ENCODE measurements at regions of chr5 and their contacts with region 1.

Region 1: GRCh38 chr5:56814963-56815658 is at the start of gene MAP3K1:
- DNase-seq: peak; percentile 94
- H3K4me3 Mint-ChIP-seq: peak within 1 kb of the TSS; percentile 91
- H3K27ac Mint-ChIP-seq: peak within 1 kb of the TSS; percentile 92
- H3K4me1 Mint-ChIP-seq: peaks cover 43% of the 10 kb centered on the region
- H3K27me3 Mint-ChIP-seq: peaks cover 3% of the 10 kb centered on the region
- total RNA-seq, gene MAP3K1: 27.6 and 27.9 TPM in 2 replicates

Region 2: GRCh38 chr5:55994574-55995333 is 820.4 kb before region 1 on chr5 and contains the start of gene IL6ST:
- intact Hi-C with region 1: loop called (anchors 5 kb)
- DNase-seq: peak; percentile 99
- H3K4me3 Mint-ChIP-seq: peak within 1 kb of the TSS; percentile 93
- H3K27ac Mint-ChIP-seq: peak within 1 kb of the TSS; percentile 94
- H3K4me1 Mint-ChIP-seq: peaks cover 52% of the 10 kb centered on the region
- H3K27me3 Mint-ChIP-seq: no peaks in the 10 kb centered on the region
- total RNA-seq, gene IL6ST: 65.1 and 68.2 TPM in 2 replicates

Region 3: GRCh38 chr5:56481428-56482357 is 333.4 kb before region 1 on chr5:
- intact Hi-C with region 1: loop called (anchors 2 kb)
- DNase-seq: peak; percentile 78
- H3K4me3 Mint-ChIP-seq: peak overlapping the region; percentile 86
- H3K27ac Mint-ChIP-seq: peak overlapping the region; percentile 91
- H3K4me1 Mint-ChIP-seq: peaks cover 38% of the 10 kb centered on the region
- H3K27me3 Mint-ChIP-seq: no peaks in the 10 kb centered on the region

Region 4: GRCh38 chr5:56670118-56670483 is 145.0 kb before region 1 on chr5:
- intact Hi-C with region 1: loop called (anchors 2 kb)
- DNase-seq: peak; percentile 86
- H3K4me3 Mint-ChIP-seq: peak overlapping the region; percentile 13
- H3K27ac Mint-ChIP-seq: peak overlapping the region; percentile 67
- H3K4me1 Mint-ChIP-seq: peaks cover 36% of the 10 kb centered on the region
- H3K27me3 Mint-ChIP-seq: peaks cover 6% of the 10 kb centered on the region

Region 5: DNA sequence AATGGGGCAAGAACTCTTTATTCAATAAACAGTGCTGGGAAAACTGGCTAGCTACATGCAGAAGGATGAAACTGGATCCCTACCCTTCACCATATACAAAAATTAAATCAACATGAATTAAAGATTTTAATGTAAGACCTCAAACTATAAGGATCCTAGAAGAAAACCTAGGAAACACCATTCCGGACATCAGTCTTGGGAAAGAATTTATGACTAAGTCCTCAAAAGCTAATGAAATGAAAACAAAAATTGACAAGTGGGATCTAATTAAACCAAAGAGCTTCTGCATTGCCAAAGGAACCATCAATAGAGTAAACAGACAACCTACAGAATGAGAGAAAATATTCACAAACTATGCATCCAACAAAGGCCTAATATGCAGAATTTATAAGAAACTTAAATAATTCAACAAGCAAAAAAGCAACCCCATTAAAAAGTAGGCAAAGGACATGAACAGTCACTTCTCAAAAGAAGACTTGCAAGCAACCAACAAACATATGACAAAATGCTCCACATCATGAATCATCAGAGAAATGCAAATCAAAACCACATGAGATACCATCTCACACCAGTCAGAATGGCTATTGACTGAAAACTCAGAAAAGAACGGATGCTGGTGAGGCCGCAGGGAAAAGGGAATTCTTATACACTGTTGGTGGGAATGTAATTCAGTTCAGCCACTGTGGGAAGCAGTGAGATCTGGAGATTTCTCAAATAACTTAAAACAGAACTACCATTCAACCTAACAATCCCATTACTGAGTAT is 104.1 kb before region 1 on chr5:
- intact Hi-C with region 1: loop called (anchors 5 kb)
- DNase-seq: peak; percentile 70
- H3K4me3 Mint-ChIP-seq: no peak overlapping the region
- H3K27ac Mint-ChIP-seq: no peak overlapping the region
- H3K4me1 Mint-ChIP-seq: peaks cover 15% of the 10 kb centered on the region
- H3K27me3 Mint-ChIP-seq: peaks cover 12% of the 10 kb centered on the region

Region 6: GRCh38 chr5:56831773-56832172 is 16.7 kb after region 1 on chr5:
- intact Hi-C with region 1: loop called (anchors 2 kb)
- DNase-seq: no peak
- H3K4me3 Mint-ChIP-seq: no peak overlapping the region
- H3K27ac Mint-ChIP-seq: no peak overlapping the region
- H3K4me1 Mint-ChIP-seq: peaks cover 66% of the 10 kb centered on the region
- H3K27me3 Mint-ChIP-seq: no peaks in the 10 kb centered on the region

Region 7: GRCh38 chr5:57173185-57174127 is 358.3 kb after region 1 on chr5 and contains the start of gene GPBP1:
- intact Hi-C with region 1: loop called (anchors 2 kb)
- DNase-seq: peak; percentile 99
- H3K4me3 Mint-ChIP-seq: peak within 1 kb of the TSS; percentile 97
- H3K27ac Mint-ChIP-seq: peak within 1 kb of the TSS; percentile 99
- H3K4me1 Mint-ChIP-seq: peaks cover 30% of the 10 kb centered on the region
- H3K27me3 Mint-ChIP-seq: peaks cover 2% of the 10 kb centered on the region
- total RNA-seq, gene GPBP1: 85.2 and 86.7 TPM in 2 replicates